ENCODE measurements at regions of chrX and their contacts with region 1.

Region 1: DNA sequence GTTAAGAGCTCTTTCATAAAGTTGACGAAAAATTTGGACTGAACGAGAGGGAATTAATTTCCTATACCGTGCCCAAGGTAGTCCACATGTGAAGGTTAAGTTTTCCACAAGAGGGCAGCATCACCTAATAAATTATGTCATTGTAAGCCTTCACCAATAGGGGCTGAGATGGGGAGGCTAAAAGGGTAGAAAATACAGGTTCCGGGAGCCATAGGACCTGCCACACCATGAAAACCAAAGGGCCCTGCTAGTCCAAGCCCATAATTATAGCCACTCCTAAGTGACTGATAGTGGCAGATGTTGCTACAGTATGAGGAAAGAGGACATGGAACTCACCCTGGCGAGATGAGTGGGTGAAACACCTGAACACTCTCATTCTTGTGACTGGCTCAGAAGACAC is 122.2 kb downstream of the SHROOM4 start:
- DNase-seq: peak; percentile 4
- ATAC-seq: peak; percentile 60
- H3K4me3 Mint-ChIP-seq: no peak overlapping the region
- H3K27ac Mint-ChIP-seq: no peak overlapping the region
- H3K4me1 Mint-ChIP-seq: no peaks in the 10 kb centered on the region
- H3K27me3 Mint-ChIP-seq: peaks cover 6% of the 10 kb centered on the region

Region 2: GRCh38 chrX:50448565-50448964 is 243.3 kb before region 1 on chrX:
- CTCF ChIA-PET with region 1: no interaction called
- POLR2A ChIA-PET with region 1: no interaction called
- intact Hi-C with region 1: no loop called
- DNase-seq: peak; percentile 18
- ATAC-seq: peak; percentile 42
- H3K4me3 Mint-ChIP-seq: no peak overlapping the region
- H3K27ac Mint-ChIP-seq: no peak overlapping the region
- H3K4me1 Mint-ChIP-seq: no peaks in the 10 kb centered on the region
- H3K27me3 Mint-ChIP-seq: peaks cover 10% of the 10 kb centered on the region

Region 3: GRCh38 chrX:50609796-50610195 is 82.0 kb before region 1 on chrX:
- CTCF ChIA-PET with region 1: no interaction called
- POLR2A ChIA-PET with region 1: no interaction called
- intact Hi-C with region 1: no loop called
- DNase-seq: no peak
- ATAC-seq: no peak
- H3K4me3 Mint-ChIP-seq: no peak overlapping the region
- H3K27ac Mint-ChIP-seq: no peak overlapping the region
- H3K4me1 Mint-ChIP-seq: peaks cover 3% of the 10 kb centered on the region
- H3K27me3 Mint-ChIP-seq: no peaks in the 10 kb centered on the region

Region 4: GRCh38 chrX:50905334-50905733 is 213.5 kb after region 1 on chrX:
- CTCF ChIA-PET with region 1: interaction called, 7 read pairs
- POLR2A ChIA-PET with region 1: no interaction called
- intact Hi-C with region 1: loop called (anchors 5 kb)
- DNase-seq: peak; percentile 17
- ATAC-seq: no peak
- H3K4me3 Mint-ChIP-seq: no peak overlapping the region
- H3K27ac Mint-ChIP-seq: no peak overlapping the region
- H3K4me1 Mint-ChIP-seq: no peaks in the 10 kb centered on the region
- H3K27me3 Mint-ChIP-seq: peaks cover 3% of the 10 kb centered on the region

Region 5: DNA sequence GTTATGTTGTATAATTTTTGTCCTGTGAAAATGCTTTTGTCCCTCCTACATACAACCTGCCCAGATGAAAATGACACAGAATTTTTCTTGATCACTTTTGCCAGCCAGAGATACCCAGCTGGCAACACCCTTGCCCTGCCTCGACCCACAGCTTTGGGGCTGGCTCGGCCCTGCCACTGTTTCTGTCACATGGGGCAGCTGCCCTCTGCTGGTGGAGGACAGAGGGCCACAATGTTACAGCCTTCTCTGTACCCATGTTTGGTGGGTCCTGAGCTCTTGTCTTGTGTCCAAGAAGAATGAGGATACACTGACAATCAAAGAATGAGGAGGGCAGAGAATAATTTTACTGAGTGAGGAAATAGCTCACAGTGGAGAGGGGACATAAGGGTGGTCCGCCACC is 249.8 kb after region 1 on chrX:
- CTCF ChIA-PET with region 1: no interaction called
- POLR2A ChIA-PET with region 1: no interaction called
- intact Hi-C with region 1: loop called in 1 of 2 experiments (anchors 5 kb)
- DNase-seq: peak; percentile 24
- ATAC-seq: no peak
- H3K4me3 Mint-ChIP-seq: no peak overlapping the region
- H3K27ac Mint-ChIP-seq: no peak overlapping the region
- H3K4me1 Mint-ChIP-seq: no peaks in the 10 kb centered on the region
- H3K27me3 Mint-ChIP-seq: peaks cover 3% of the 10 kb centered on the region

Region 6: GRCh38 chrX:50988649-50989048 is 296.8 kb after region 1 on chrX:
- CTCF ChIA-PET with region 1: no interaction called
- POLR2A ChIA-PET with region 1: no interaction called
- intact Hi-C with region 1: loop called (anchors 2 kb)
- DNase-seq: peak; percentile 19
- ATAC-seq: no peak
- H3K4me3 Mint-ChIP-seq: no peak overlapping the region
- H3K27ac Mint-ChIP-seq: no peak overlapping the region
- H3K4me1 Mint-ChIP-seq: no peaks in the 10 kb centered on the region
- H3K27me3 Mint-ChIP-seq: peaks cover 3% of the 10 kb centered on the region

Region 7: GRCh38 chrX:51006064-51006463 is 314.2 kb after region 1 on chrX:
- CTCF ChIA-PET with region 1: no interaction called
- POLR2A ChIA-PET with region 1: no interaction called
- intact Hi-C with region 1: no loop called
- DNase-seq: no peak
- ATAC-seq: no peak
- H3K4me3 Mint-ChIP-seq: no peak overlapping the region
- H3K27ac Mint-ChIP-seq: no peak overlapping the region
- H3K4me1 Mint-ChIP-seq: no peaks in the 10 kb centered on the region
- H3K27me3 Mint-ChIP-seq: no peaks in the 10 kb centered on the region